Head of caudate nucleus (tissue), 42 donors: ENCODE measurements at regions of chr4 and their contacts with region 1.

Region 1: DNA sequence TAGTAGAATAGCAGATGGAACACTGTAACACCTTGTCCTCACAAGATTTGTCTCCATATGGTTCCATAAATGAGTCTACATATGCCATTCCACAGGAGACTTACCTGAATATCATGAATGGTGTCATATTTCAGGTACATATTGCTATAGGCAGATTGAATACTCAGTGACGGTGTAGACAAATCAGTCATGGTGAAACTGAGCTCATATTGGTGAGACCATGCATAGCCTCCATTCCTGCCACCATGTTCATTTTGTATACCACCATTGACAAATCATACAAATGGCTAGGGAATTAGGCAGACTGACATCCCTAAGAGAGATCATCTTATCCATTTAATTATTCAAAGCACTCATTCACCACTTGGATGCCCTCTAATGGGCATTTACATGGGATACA is 38.0 kb upstream of the SPP1 start:
- DNase-seq: no peak

Region 2: DNA sequence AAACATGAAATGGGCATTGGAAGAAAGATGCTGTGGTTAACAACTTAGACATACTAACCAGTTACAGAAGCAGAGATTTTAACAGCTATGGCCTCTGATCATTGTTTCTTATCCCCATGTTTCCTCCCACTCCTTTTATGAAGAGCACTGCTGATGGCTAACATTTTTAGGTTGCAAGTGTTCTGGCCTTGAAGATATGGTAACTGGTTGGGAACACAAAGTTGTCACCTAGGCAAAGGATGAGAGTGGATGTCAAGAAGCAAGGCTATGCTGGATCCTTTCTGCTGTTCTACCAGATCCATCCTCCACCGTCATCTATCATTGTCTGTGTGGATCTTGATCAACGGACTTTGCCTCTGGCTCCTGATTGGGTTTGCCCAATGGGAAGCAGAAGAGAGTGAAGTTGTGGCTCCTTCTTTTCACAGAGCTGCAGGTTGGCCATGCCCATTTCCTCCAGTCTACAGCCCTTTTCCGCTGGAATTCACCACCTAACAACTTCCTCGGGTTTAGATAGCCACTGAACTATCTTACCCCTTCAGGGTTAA is 10.9 kb before region 1 on chr4:
- intact Hi-C with region 1: loop called (anchors 1 kb)
- DNase-seq: no peak

Region 3: DNA sequence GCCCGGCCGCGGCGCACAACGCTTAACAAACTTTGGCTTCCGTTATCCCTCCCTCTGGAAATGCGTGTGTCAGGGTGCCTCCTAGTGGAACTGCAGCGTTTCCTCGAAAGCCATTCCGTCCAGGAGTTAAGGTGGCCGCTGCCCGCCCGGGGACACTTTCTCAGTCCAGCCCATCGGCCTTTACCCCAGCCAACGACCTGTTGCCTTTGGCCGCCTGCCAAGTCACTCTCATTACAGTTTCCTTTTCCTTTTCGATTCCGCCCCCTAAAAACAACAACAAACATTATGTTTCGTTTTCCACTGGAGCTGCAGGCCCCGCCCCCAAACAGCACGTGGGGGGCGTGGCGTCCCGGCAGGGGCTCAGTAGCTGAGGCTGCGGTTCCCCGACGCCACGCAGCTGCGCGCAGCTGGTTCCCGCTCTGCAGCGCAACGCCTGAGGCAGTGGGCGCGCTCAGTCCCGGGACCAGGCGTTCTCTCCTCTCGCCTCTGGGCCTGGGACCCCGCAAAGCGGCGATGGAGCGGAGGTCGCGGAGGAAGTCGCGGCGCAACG is 519.3 kb after region 1 on chr4 and contains the start of gene HERC5:
- intact Hi-C with region 1: no loop called
- DNase-seq: peak; percentile 61 to 92 (median 79)